RWPE1 (cell line): ENCODE measurements at regions of chr1 and their contacts with region 1.

Region 1: GRCh38 chr1:208245185-208245705 is 1.1 kb upstream of the PLXNA2 start:
- DNase-seq: peak; percentile 78
- H3K27ac ChIP-seq: peak overlapping the region; percentile 85
- CTCF ChIP-seq: peak; percentile 75

Region 2: DNA sequence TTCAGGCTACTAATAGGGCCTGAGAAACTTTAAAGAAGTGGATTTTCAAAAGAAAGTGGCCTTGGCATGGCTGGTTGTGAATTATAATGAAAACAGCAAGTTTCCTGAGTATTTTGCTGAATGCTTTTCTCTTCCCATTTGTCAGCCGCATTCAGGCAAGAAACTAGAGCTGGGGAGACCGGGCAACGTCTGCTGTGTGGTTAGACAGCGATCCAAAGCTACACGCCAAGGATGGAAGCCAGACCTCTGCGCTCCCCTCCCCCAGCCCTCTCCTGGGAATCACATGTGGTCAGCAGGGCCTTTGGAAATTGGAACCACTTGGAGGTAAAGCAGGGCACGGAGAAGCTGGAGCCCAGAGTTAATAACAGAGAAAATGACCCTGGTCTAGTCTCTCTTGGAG is 220.2 kb before region 1 on chr1:
- CTCF ChIA-PET with region 1: interaction called, 25 read pairs
- POLR2A ChIA-PET with region 1: no interaction called
- DNase-seq: no peak
- H3K27ac ChIP-seq: no peak overlapping the region
- CTCF ChIP-seq: no peak

Region 3: DNA sequence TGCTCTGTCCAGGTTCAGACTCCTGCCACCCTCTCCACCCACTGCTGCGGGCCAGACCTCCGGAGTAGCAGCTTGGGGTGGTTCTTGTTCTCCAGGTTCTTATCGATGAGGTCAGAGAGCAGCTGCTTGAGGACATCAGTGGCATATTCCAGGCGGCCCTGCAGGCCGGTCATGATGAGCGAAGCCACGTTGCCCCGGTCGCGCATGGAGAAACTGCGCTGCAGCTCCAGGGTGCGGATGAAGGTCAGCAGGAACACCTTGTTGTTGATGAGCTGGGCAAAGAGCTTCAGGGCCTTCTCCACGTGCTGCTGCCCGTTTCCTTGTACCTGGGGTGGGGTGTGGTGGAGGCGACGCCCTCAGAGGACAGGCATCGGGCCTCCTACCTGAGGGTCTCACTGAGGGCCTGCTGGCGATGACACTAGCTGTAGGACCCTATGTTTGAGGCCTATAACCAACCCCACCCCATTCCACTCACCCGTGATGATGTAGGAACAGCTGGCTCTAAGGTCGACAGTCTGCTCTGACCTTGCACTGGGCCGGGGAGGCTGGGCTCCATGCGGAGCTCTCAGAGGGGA is 203.1 kb before region 1 on chr1:
- CTCF ChIA-PET with region 1: interaction called, 11 read pairs
- POLR2A ChIA-PET with region 1: no interaction called
- DNase-seq: no peak
- H3K27ac ChIP-seq: no peak overlapping the region; the same call in 1 of the 2 replicates
- CTCF ChIP-seq: no peak

Region 4: GRCh38 chr1:208132287-208132883 is 112.9 kb before region 1 on chr1:
- CTCF ChIA-PET with region 1: interaction called, 15 read pairs
- POLR2A ChIA-PET with region 1: no interaction called
- DNase-seq: peak; percentile 90
- H3K27ac ChIP-seq: peak overlapping the region; percentile 55
- CTCF ChIP-seq: peak; percentile 75